GM12878 (cell line): ENCODE measurements at regions of chr5 and their contacts with region 1.

Region 1: DNA sequence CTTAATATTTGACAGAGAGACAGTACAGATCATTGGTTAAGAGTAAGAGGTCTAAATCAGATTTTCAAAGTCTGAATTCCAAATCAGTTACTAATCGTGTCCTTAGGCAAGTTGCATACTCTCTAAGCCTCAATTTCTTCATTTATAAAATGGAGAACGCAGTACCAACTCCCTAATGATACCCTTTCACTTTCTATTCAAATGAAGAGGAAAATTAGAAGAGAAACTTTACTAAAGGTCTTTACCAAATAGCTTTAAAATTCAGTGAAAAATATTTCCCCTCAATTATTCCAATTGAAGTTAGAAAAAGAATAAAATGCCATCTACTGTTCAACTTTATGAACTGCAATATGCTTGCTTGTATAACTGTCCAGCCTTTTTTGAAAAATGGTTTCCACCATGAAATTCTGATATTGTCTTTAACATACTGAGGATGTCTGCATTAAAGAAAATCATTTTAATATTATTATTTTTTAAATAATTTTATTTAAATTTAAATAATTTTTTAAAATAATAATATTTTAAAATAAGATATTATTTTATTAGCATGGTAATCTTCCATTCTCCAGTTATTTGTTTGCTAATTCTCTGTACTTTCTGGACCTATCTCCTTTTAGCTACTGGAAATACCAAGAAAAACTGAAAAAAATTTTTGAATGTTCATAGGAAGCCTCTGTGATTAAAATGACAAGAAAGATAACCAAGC is 36.0 kb downstream of the POC5 start:
- DNase-seq: no peak
- ATAC-seq: peak; percentile 74
- H3K4me3 ChIP-seq: no peak overlapping the region
- H3K27ac ChIP-seq: no peak overlapping the region
- H3K4me1 ChIP-seq: no peaks in the 10 kb centered on the region
- H3K27me3 ChIP-seq: no peaks in the 10 kb centered on the region
- CTCF ChIP-seq: peak; percentile 52 to 62 (median 56)
- EP300 ChIP-seq: no peak
- POLR2A ChIP-seq: no peak
- RAD21 ChIP-seq: peak; percentile 62

Region 2: GRCh38 chr5:75336625-75337339 is 344.5 kb before region 1 on chr5 and contains the start of gene HMGCR:
- CTCF ChIA-PET with region 1: interaction called, 9 read pairs
- POLR2A ChIA-PET with region 1: no interaction called
- RAD21 ChIA-PET with region 1: interaction called, 8 read pairs
- SMC1A ChIA-PET with region 1: interaction called, 21 read pairs
- in situ Hi-C with region 1: no loop called
- intact Hi-C with region 1: loop called (anchors 10 kb)
- DNase-seq: peak; percentile 98
- ATAC-seq: peak; percentile 97
- H3K4me3 ChIP-seq: peak within 1 kb of the TSS; percentile 91
- H3K27ac ChIP-seq: peak within 1 kb of the TSS; percentile 96
- H3K4me1 ChIP-seq: peaks cover 6% of the 10 kb centered on the region; the same call in 1 of the 2 replicates
- H3K27me3 ChIP-seq: no peaks in the 10 kb centered on the region
- CTCF ChIP-seq: peak; percentile 30 to 42 (median 32); a peak in 4 of 6 replicates
- EP300 ChIP-seq: peak in 1 of 2 experiments; percentile 51; a peak in 3 of 4 replicates
- POLR2A ChIP-seq: peak; percentile 98
- RAD21 ChIP-seq: no peak
- polyA plus RNA-seq, gene HMGCR: 30.8 to 39.0 TPM

Region 3: GRCh38 chr5:75395277-75395676 is 286.0 kb before region 1 on chr5:
- CTCF ChIA-PET with region 1: no interaction called
- POLR2A ChIA-PET with region 1: no interaction called
- RAD21 ChIA-PET with region 1: interaction called, 3 read pairs
- SMC1A ChIA-PET with region 1: interaction called, 10 read pairs
- in situ Hi-C with region 1: no loop called
- intact Hi-C with region 1: no loop called
- DNase-seq: no peak
- ATAC-seq: no peak
- H3K4me3 ChIP-seq: no peak overlapping the region
- H3K27ac ChIP-seq: no peak overlapping the region
- H3K4me1 ChIP-seq: no peaks in the 10 kb centered on the region
- H3K27me3 ChIP-seq: no peaks in the 10 kb centered on the region
- CTCF ChIP-seq: no peak
- EP300 ChIP-seq: no peak
- POLR2A ChIP-seq: no peak
- RAD21 ChIP-seq: no peak

Region 4: DNA sequence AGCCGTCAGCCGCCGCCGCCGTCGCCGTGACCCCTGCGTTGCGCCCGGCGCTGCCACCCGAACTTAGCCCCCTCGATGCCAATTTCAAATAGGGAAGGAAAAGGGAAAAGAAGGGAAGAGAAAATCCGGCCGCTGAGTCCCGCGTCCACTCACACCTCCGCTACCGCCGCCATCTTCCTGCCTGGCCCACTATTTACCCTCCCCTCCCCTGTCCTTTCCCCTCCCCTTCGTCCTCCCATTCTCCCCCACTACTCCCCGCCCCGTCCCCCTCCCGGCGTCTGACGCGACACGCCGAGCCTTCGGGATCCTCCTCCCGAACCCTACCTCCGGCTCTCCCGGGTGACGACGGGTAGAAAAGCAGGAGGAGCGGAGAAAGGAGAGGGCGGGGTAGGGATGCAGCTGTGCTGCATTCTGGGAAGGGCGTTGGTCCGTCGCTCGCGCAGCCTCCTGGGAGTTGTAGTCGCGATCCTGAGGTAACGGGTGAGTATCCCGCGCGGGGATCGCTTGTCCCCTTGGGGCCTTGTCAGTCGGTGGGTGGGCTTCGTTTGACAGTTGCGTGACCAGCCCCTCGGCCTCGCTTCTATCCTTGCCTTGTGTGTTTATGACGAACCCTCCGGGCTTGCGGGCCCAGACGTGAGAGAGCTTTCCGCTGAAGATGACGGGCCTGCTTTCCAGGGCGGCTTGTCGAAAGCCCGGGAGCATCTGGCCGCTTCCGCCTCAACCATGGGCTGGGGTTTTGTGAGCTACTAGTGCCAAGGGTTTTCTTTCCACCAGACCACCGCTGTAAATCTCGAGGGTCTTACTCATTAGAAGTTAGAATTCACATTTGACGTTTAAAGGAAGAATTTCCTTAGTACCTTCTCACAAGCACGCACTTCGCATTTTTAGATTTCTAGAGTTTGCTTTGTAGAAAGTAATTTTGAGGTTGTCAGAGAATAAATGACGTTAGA is 169.6 kb before region 1 on chr5 and contains the starts of genes CERT1 and POLK:
- CTCF ChIA-PET with region 1: interaction called, 10 read pairs
- POLR2A ChIA-PET with region 1: interaction called, 4 read pairs
- RAD21 ChIA-PET with region 1: interaction called, 6 read pairs
- SMC1A ChIA-PET with region 1: interaction called, 9 read pairs
- in situ Hi-C with region 1: no loop called
- intact Hi-C with region 1: no loop called
- DNase-seq: peak; percentile 96
- ATAC-seq: peak; percentile 76
- H3K4me3 ChIP-seq: peak within 1 kb of the TSS; percentile 98
- H3K27ac ChIP-seq: peak within 1 kb of the TSS; percentile 95
- H3K4me1 ChIP-seq: 0 out of 2 replicates have a peak, but pooled peaks cover 3% of the 10 kb centered on the region
- H3K27me3 ChIP-seq: no peaks in the 10 kb centered on the region
- CTCF ChIP-seq: no peak
- EP300 ChIP-seq: no peak; a peak in 1 of 4 replicates
- POLR2A ChIP-seq: peak; percentile 70
- RAD21 ChIP-seq: no peak; the same call in 1 of the 2 replicates
- polyA plus RNA-seq, gene CERT1: 7.7 to 10.4 TPM
- polyA plus RNA-seq, gene POLK: 10.4 to 10.7 TPM

Region 5: GRCh38 chr5:75574791-75575190 is 106.5 kb before region 1 on chr5:
- CTCF ChIA-PET with region 1: interaction called, 14 read pairs
- POLR2A ChIA-PET with region 1: interaction called, 3 read pairs
- RAD21 ChIA-PET with region 1: interaction called, 9 read pairs
- SMC1A ChIA-PET with region 1: interaction called, 7 read pairs
- in situ Hi-C with region 1: no loop called
- intact Hi-C with region 1: no loop called
- DNase-seq: no peak
- ATAC-seq: no peak; the same call in 2 of the 3 replicates
- H3K4me3 ChIP-seq: peak overlapping the region; percentile 40; the same call in 1 of the 2 replicates
- H3K27ac ChIP-seq: peak overlapping the region; percentile 84
- H3K4me1 ChIP-seq: peaks cover 15% of the 10 kb centered on the region
- H3K27me3 ChIP-seq: no peaks in the 10 kb centered on the region
- CTCF ChIP-seq: no peak
- EP300 ChIP-seq: no peak
- POLR2A ChIP-seq: no peak
- RAD21 ChIP-seq: no peak

Region 6: DNA sequence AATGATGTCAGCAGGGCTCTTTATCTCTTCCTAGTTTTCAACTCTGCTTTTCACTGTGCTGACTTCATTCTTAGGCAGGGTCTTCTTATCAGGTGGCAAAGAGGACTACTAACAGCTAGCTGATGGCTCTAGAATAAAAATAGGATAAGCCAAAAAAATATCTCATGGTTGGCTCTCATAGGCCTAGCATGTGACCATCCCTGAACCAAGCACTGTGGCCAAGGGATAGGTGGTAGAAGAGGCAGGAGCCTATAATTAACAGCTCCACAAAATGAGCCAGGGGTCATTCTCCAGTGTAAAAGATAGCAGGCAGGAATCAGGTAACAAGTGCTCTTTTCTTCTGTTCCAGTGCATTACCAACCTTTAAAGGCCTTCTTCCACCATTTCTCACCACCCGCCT is 49.0 kb before region 1 on chr5:
- CTCF ChIA-PET with region 1: no interaction called
- POLR2A ChIA-PET with region 1: no interaction called
- RAD21 ChIA-PET with region 1: no interaction called
- SMC1A ChIA-PET with region 1: no interaction called
- in situ Hi-C with region 1: no loop called
- intact Hi-C with region 1: no loop called
- DNase-seq: no peak
- ATAC-seq: no peak
- H3K4me3 ChIP-seq: no peak overlapping the region
- H3K27ac ChIP-seq: no peak overlapping the region
- H3K4me1 ChIP-seq: no peaks in the 10 kb centered on the region
- H3K27me3 ChIP-seq: no peaks in the 10 kb centered on the region
- CTCF ChIP-seq: no peak
- EP300 ChIP-seq: no peak
- POLR2A ChIP-seq: no peak
- RAD21 ChIP-seq: no peak

Region 7: GRCh38 chr5:75656311-75657003 is 24.8 kb before region 1 on chr5:
- CTCF ChIA-PET with region 1: interaction called, 13 read pairs
- POLR2A ChIA-PET with region 1: no interaction called
- RAD21 ChIA-PET with region 1: interaction called, 3 read pairs
- SMC1A ChIA-PET with region 1: interaction called, 7 read pairs
- in situ Hi-C with region 1: no loop called
- intact Hi-C with region 1: no loop called
- DNase-seq: no peak
- ATAC-seq: no peak
- H3K4me3 ChIP-seq: no peak overlapping the region
- H3K27ac ChIP-seq: no peak overlapping the region
- H3K4me1 ChIP-seq: peaks cover 11% of the 10 kb centered on the region; the same call in 1 of the 2 replicates
- H3K27me3 ChIP-seq: no peaks in the 10 kb centered on the region
- CTCF ChIP-seq: no peak
- EP300 ChIP-seq: no peak
- POLR2A ChIP-seq: no peak
- RAD21 ChIP-seq: no peak